ENCODE measurements at regions of chr2 and their contacts with region 1.

Region 1: DNA sequence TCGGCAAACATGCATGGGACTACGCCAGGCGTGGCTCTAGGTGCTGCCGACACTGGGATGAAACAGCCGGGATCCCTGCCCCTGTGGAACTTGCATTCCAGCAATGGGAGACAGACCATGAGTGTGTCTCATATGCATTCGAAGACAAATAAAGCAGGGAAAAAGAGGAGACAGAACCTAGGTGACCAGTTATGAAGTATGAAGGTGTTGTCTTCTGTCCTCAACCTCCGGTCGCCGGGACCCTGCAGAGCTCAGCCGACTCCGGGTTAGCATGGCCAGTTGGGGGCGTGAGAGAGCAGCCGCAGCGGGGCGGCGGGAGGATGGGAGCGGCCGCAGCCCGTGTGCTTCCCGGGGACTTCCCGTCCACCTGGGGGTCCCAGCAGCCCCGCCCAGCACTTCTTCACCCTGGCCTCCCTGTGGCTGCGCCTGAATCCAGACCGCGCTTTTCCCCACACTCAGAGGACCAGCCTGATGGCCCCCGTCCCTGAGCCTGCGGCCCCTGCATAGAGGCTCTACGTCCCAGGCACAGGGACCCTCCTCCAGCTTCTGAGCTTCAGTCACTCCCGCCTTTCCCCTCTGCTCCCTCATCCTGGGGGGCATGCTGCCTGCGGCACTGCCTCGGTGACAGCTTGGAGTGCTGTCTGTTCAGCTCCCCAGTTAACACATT is 11.4 kb downstream of the ID2 start:
- DNase-seq: no peak
- ATAC-seq: peak; percentile 67

Region 2: DNA sequence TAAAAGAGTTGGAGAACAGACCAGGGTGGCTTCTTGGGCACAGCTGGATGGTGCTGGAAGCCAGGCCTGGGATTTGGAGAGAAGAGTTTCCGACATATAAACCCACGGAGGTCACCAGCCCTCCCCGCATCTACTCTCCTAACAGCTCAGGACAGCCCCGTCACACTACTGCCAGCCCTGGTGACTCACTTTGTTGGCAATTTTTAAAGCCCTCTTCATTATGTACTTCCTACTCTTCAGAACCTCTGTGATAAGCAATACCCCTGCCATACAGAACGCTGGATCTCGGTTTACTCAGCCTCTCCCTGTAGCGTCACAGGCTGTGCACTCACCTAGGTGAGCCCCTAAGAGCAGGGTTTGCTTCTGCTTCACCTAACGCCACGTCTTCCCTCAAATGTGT is 36.7 kb after region 1 on chr2:
- intact Hi-C with region 1: no loop called
- DNase-seq: no peak
- ATAC-seq: no peak

Region 3: GRCh38 chr2:8761529-8762164 is 68.4 kb after region 1 on chr2:
- intact Hi-C with region 1: loop called (anchors 5 kb)
- DNase-seq: no peak
- ATAC-seq: peak; percentile 50